ENCODE measurements at regions of chr6 and their contacts with region 1.

Region 1: GRCh38 chr6:32529697-32530429 is at the start of gene HLA-DRB5:
- DNase-seq: peak; percentile 11
- ATAC-seq: peak; percentile 49
- H3K4me3 Mint-ChIP-seq: no peak within 1 kb of the TSS
- H3K27ac Mint-ChIP-seq: no peak within 1 kb of the TSS
- H3K4me1 Mint-ChIP-seq: peaks cover 3% of the 10 kb centered on the region
- H3K27me3 Mint-ChIP-seq: peaks cover 2% of the 10 kb centered on the region
- total RNA-seq, gene HLA-DRB5: 4.1 to 4.7 TPM

Region 2: DNA sequence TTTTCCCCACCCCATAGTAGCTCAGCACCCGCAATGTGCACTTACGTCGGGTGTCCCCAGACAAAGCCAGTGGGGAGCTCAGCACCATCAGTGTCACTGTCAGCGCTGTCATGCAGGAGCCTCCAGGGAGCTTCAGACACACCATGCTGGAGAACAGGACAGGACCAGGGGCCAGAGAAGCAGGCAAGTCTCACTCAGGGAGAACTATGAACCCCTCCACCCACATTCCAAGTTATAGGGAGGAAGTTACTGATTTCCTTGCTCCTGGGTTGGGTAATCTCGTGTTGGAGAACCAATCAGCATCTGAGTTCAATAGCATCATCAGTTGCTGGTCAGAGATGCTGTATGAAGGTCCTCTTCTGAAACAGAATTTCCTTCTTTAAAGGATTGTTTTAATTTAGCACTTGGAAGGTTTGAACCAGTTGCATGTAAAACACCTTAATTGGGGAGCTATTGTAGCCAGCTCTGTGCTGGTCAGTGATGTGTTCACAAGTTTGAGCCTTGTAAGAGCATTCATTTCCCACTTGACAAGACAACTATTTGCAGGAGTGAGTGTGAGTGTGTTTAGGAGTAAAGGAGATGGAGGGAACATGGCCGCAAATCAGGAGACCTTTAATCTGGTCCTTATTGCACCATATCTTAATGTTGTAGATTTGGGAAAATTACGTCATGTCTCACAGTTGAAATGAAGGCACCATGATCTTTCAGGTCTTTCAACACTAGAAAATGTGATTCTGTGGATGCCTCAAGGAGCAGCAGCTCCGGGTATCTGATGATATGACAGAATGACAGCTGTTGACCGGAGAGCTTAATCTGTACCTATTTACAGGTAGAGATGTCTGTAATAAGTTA is 60.0 kb after region 1 on chr6 and contains the start of gene HLA-DRB1:
- CTCF ChIA-PET with region 1: interaction called, 3 read pairs
- POLR2A ChIA-PET with region 1: no interaction called
- intact Hi-C with region 1: loop called in 1 of 2 experiments (anchors 10 kb)
- DNase-seq: peak; percentile 29
- ATAC-seq: peak; percentile 94
- H3K4me3 Mint-ChIP-seq: peak within 1 kb of the TSS; percentile 61
- H3K27ac Mint-ChIP-seq: no peak within 1 kb of the TSS
- H3K4me1 Mint-ChIP-seq: peaks cover 2% of the 10 kb centered on the region
- H3K27me3 Mint-ChIP-seq: no peaks in the 10 kb centered on the region
- total RNA-seq, gene HLA-DRB1: 12.7 to 16.6 TPM

Measured in activated CD4-positive, alpha-beta T cell treated with anti-CD3 and anti-CD28 coated beads for 36 hours (primary cell).